ENCODE measurements at regions of chr4 and their contacts with region 1.

Region 1: DNA sequence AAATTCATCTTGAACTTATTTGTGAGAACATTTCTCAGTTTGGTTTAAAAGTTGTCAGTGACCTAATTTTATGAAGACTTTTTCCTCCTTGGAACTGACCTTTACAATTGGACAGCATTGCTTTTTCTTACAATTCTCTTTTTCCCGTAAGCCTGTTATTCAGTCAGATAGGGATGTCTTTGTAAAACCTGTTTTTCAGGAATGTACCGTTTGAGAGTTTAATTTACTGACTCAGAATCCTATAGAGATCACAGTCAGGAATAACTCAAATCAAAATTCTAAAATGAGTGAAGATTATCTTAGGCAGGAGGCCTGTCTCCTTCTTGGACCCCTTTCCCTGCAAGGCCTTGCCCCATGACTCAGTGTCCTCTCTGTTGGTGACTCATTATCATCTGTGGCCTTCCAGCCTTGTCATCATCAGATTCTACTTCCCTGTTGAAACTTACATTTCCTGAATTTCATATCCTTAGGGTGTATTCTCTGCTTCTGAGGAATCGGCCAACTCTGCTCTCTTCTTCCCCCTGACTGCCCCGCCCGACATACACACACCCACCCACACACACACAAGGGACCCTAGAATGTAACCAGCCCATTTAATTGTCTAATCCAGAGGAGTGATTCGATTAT is 99.8 kb downstream of the ARHGAP10 start:
- DNase-seq: peak; percentile 70 to 94
- H3K4me3 ChIP-seq: 0 out of 2 replicates have a peak overlapping the region, but pooled peaks have one; percentile 28
- H3K27ac ChIP-seq: peak overlapping the region; percentile 94
- H3K4me1 ChIP-seq: peaks cover 42% of the 10 kb centered on the region
- H3K27me3 ChIP-seq: no peaks in the 10 kb centered on the region
- CTCF ChIP-seq: no peak

Region 2: GRCh38 chr4:147714575-147715401 is 116.9 kb before region 1 on chr4:
- CTCF ChIA-PET with region 1: no interaction called
- POLR2A ChIA-PET with region 1: no interaction called
- intact Hi-C with region 1: loop called (anchors 1 kb)
- DNase-seq: peak; percentile 58 to 92
- H3K4me3 ChIP-seq: peak overlapping the region; percentile 39; the same call in 1 of the 2 replicates
- H3K27ac ChIP-seq: peak overlapping the region; percentile 64
- H3K4me1 ChIP-seq: peaks cover 21% of the 10 kb centered on the region
- H3K27me3 ChIP-seq: no peaks in the 10 kb centered on the region
- CTCF ChIP-seq: no peak

Region 3: DNA sequence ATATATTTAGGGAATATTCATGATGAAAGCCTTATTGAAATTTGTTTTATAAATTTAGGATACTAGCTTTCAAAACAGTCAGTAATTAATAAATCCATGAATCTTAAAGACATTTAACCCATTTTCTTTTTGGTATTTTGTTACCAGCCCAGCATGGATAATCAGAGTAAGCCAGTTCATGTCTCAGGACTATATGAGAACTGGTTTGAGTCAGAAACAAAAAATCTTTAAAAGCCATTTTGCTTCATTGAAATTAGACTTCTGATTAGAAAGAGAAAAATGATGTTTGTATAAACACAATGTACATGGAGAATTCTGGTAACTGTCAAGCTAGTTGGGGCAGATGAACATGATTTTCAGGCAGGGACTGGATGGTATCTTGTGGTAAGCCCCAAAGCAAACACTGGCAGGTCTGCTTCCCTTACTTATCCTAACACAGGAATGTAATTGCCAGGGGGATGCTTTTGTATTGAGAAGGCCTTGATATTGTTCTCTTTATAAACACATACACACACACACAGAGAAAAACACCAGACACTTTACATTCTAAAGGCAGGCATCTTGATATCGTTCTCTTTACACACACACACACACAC is 90.4 kb before region 1 on chr4:
- CTCF ChIA-PET with region 1: no interaction called
- POLR2A ChIA-PET with region 1: no interaction called
- intact Hi-C with region 1: loop called (anchors 1 kb)
- DNase-seq: peak; percentile 33 to 61
- H3K4me3 ChIP-seq: no peak overlapping the region
- H3K27ac ChIP-seq: peak overlapping the region; percentile 53; the same call in 1 of the 2 replicates
- H3K4me1 ChIP-seq: peaks cover 22% of the 10 kb centered on the region
- H3K27me3 ChIP-seq: no peaks in the 10 kb centered on the region
- CTCF ChIP-seq: no peak

Region 4: DNA sequence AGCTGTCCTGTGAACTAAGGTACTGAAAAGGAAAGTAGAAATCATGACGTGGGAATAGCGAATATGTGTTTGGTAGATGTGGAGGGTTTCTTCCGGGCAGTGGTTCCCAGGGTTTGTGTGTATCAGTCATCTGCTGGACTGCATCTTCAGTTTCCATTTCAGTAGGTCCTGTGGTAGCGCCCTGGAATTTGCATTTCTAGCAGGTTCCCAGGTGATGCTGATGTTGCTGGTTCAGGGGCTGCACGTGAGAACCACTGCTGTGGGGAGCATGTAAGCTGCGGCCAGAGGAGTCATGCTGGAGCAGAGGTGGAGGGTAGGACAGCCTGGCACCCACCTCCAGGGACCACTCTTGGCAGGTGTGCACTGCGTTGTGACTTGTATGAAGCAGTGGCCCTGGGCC is 52.7 kb before region 1 on chr4:
- CTCF ChIA-PET with region 1: no interaction called
- POLR2A ChIA-PET with region 1: no interaction called
- intact Hi-C with region 1: loop called (anchors 5 kb)
- DNase-seq: no peak
- H3K4me3 ChIP-seq: no peak overlapping the region
- H3K27ac ChIP-seq: no peak overlapping the region
- H3K4me1 ChIP-seq: peaks cover 34% of the 10 kb centered on the region
- H3K27me3 ChIP-seq: no peaks in the 10 kb centered on the region
- CTCF ChIP-seq: no peak

Region 5: GRCh38 chr4:147786031-147786430 is 45.6 kb before region 1 on chr4:
- CTCF ChIA-PET with region 1: interaction called, 3 read pairs
- POLR2A ChIA-PET with region 1: no interaction called
- intact Hi-C with region 1: loop called (anchors 1 kb)
- DNase-seq: no peak
- H3K4me3 ChIP-seq: no peak overlapping the region
- H3K27ac ChIP-seq: peak overlapping the region; percentile 34; the same call in 1 of the 2 replicates
- H3K4me1 ChIP-seq: peaks cover 74% of the 10 kb centered on the region
- H3K27me3 ChIP-seq: no peaks in the 10 kb centered on the region
- CTCF ChIP-seq: no peak

Region 6: GRCh38 chr4:147793569-147794313 is 37.9 kb before region 1 on chr4:
- CTCF ChIA-PET with region 1: no interaction called
- POLR2A ChIA-PET with region 1: interaction called, 3 read pairs
- intact Hi-C with region 1: loop called (anchors 1 kb)
- DNase-seq: peak in 1 of 2 experiments; percentile 62
- H3K4me3 ChIP-seq: peak overlapping the region; percentile 8; the same call in 1 of the 2 replicates
- H3K27ac ChIP-seq: peak overlapping the region; percentile 37
- H3K4me1 ChIP-seq: peaks cover 60% of the 10 kb centered on the region
- H3K27me3 ChIP-seq: no peaks in the 10 kb centered on the region
- CTCF ChIP-seq: no peak

Region 7: GRCh38 chr4:147866532-147867271 is 35.0 kb after region 1 on chr4:
- CTCF ChIA-PET with region 1: no interaction called
- POLR2A ChIA-PET with region 1: no interaction called
- intact Hi-C with region 1: no loop called
- DNase-seq: peak; percentile 49 to 80
- H3K4me3 ChIP-seq: no peak overlapping the region
- H3K27ac ChIP-seq: peak overlapping the region; percentile 26; the same call in 1 of the 2 replicates
- H3K4me1 ChIP-seq: no peaks in the 10 kb centered on the region
- H3K27me3 ChIP-seq: no peaks in the 10 kb centered on the region
- CTCF ChIP-seq: peak; percentile 97

Region 8: DNA sequence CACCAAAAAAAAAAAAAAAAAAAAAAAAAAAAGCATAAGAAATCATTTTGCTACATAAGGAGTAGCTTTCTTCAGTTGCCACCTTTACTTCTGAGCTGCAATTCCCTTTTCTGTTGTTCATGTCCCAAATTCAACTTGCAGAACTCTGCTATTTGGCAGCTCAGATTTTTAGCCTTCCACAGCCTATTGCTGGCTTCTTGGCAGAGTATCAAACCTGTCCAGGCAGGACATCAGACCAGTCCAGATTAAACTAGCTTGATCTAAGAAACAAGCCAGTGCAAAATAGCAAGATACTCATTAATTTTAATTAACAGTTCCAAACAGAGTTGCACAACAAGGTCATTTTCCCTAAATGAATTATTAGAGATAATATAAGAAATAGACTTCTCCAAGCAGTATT is 734.1 kb after region 1 on chr4:
- CTCF ChIA-PET with region 1: no interaction called
- POLR2A ChIA-PET with region 1: interaction called, 10 read pairs
- intact Hi-C with region 1: no loop called
- DNase-seq: no peak
- H3K4me3 ChIP-seq: no peak overlapping the region
- H3K27ac ChIP-seq: no peak overlapping the region
- H3K4me1 ChIP-seq: no peaks in the 10 kb centered on the region
- H3K27me3 ChIP-seq: no peaks in the 10 kb centered on the region
- CTCF ChIP-seq: no peak